ENCODE measurements at regions of chr18 and their contacts with region 1.

Region 1: DNA sequence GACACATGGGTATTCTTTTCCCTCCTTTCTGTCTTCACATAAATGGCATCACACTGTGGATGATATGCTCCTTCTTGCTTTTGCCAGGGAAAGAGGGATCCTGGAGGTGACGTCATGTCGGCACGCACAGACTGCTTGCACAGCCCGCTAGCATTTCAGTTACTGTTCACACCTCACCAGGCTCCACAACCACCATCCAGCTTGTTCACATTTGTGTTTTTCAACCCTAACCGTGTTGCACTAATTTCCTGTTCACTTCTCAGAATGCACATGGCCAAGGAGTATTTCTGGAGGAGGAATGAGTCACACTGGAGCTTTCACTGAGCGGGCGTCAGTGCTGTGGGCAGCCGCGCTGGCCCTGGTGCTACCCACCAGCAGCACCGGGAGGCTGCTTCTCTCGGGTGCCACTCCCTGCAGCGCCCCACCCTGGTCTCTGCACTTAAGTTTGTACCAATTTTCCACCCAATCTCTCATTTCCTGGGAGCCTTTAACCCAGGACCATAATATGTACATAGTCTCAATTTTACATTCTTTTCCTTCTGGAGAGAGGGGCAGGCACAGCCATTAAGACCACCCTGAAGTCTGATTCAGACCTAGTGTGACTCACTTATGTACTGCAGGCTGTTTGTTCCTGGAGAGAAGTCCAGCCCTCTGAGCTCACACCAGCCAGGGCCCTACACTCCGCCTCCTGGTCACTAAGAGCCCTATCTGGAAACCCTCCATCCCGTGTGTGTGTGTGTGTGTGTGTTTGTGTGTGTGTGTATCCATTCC is 65.1 kb downstream of the MBP start:
- DNase-seq: peak; percentile 63
- H3K4me3 ChIP-seq: no peak overlapping the region
- H3K27ac ChIP-seq: peak overlapping the region; percentile 60 to 72 (median 70)
- H3K4me1 ChIP-seq: peaks cover 15 to 73% (median 18%) of the 10 kb centered on the region in 4 donors
- H3K27me3 ChIP-seq: no peaks in the 10 kb centered on the region
- CTCF ChIP-seq: no peak
- EP300 ChIP-seq: no peak
- POLR2A ChIP-seq: no peak

Region 2: GRCh38 chr18:77095391-77096371 is 28.2 kb after region 1 on chr18:
- in situ Hi-C with region 1: no loop called
- intact Hi-C with region 1: loop called (anchors 1 kb)
- DNase-seq: no peak
- H3K4me3 ChIP-seq: no peak overlapping the region
- H3K27ac ChIP-seq: peak overlapping the region; percentile 41 to 55 (median 54)
- H3K4me1 ChIP-seq: peaks cover 1 to 47% (median 10%) of the 10 kb centered on the region in 4 donors
- H3K27me3 ChIP-seq: no peaks in the 10 kb centered on the region
- CTCF ChIP-seq: no peak
- EP300 ChIP-seq: no peak
- POLR2A ChIP-seq: no peak

Region 3: DNA sequence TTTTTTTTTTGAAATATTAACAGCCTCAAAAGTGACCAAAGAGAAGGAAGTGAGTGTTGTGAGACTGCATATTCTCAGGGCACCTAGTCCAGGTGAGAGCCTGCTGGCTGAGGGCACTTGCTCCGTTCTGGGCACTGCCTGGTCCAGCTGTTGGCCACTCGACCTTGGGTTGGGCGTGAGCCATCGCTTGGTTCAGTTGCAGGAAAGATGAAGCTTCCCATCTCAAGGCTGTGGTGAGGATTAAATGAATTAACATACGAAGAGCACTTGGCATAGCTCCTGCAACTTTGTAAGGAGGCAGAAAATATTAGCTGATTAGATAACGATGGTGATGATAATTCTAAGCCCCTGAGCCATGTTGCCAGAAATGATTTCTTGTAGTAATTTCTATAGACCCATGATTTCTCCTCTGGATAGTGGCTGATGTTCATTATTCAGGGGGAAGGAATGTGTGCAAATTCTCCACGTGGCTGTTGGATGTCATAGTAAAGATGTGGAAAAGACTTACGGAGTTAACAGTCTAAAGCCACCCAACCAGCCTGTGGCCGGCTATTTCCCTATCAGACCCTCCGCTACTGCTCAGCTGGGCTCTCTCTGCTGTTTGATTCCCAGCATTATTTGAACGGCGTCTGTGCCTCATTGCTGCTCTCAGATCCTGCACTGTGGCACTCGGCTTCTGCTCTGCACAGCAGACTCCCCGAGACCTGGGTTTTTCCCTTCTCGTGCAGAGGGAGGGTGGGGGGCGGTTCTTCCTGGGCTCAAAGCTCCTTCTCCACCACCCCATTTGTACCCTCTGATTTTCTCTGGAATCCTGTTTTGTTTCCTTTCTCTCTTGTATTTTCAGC is 403.3 kb after region 1 on chr18:
- in situ Hi-C with region 1: no loop called
- intact Hi-C with region 1: no loop called
- DNase-seq: no peak
- H3K4me3 ChIP-seq: no peak overlapping the region
- H3K27ac ChIP-seq: no peak overlapping the region
- H3K4me1 ChIP-seq: no peaks in the 10 kb centered on the region
- H3K27me3 ChIP-seq: no peaks in the 10 kb centered on the region
- CTCF ChIP-seq: no peak
- EP300 ChIP-seq: no peak
- POLR2A ChIP-seq: no peak

Measured in transverse colon (tissue), 4 donors.